ENCODE measurements at regions of chr11 and their contacts with region 1.

Region 1: GRCh38 chr11:18115360-18116127 is 9.7 kb upstream of the SAAL1 start:
- DNase-seq: peak; percentile 10 to 77 (median 66)
- ATAC-seq: peak; percentile 93
- H3K4me3 ChIP-seq: no peak overlapping the region
- H3K4me3 Mint-ChIP-seq: no peak overlapping the region
- H3K27ac ChIP-seq: no peak overlapping the region
- H3K27ac Mint-ChIP-seq: no peak overlapping the region
- H3K4me1 ChIP-seq: no peaks in the 10 kb centered on the region
- H3K4me1 Mint-ChIP-seq: peaks cover 3% of the 10 kb centered on the region
- H3K27me3 ChIP-seq: peaks cover 0 to 4% of the 10 kb centered on the region in 2 experiments
- H3K27me3 Mint-ChIP-seq: peaks cover 24% of the 10 kb centered on the region
- CTCF ChIP-seq: peak; percentile 73

Region 2: DNA sequence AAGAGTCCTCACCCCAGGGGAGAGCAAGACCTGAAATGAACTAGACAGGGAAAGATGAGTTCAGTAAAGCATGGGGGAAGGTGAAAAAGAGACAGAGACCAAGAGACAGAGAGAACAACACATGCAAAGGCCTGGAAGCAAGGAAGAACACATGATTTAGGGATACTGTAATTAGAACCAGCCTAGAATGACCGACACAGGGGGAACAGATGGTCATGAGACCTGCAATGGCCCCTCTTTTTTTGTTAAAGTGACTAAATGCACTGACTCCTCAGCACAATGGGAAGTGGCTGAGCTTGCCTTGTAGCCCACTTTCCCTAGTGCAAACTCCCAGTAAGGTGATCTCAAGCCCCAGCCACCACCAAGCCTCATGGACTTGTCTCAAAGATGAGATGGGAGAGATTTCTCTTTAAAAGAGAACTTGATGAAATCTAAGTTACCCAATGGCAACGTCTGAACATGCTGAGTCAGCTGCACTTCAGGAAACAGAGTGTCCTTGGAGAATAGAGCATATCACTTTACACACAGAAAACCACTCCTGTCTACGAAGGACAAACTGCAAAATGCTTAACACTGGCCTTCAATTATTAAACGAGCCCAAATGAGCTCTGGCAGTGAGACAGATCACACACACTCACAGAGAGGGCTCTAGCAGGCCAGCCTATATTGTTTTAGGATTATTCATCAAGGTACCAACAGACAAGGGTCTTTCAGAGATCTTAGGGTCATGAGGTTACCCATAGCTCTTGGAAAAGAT is 193.7 kb before region 1 on chr11:
- CTCF ChIA-PET with region 1: no interaction called
- POLR2A ChIA-PET with region 1: no interaction called
- intact Hi-C with region 1: no loop called
- DNase-seq: no peak
- ATAC-seq: no peak
- H3K4me3 ChIP-seq: no peak overlapping the region
- H3K4me3 Mint-ChIP-seq: no peak overlapping the region
- H3K27ac ChIP-seq: no peak overlapping the region
- H3K27ac Mint-ChIP-seq: no peak overlapping the region
- H3K4me1 ChIP-seq: no peaks in the 10 kb centered on the region
- H3K4me1 Mint-ChIP-seq: no peaks in the 10 kb centered on the region
- H3K27me3 ChIP-seq: no peaks in the 10 kb centered on the region
- H3K27me3 Mint-ChIP-seq: no peaks in the 10 kb centered on the region
- CTCF ChIP-seq: no peak

Region 3: GRCh38 chr11:17991783-17992433 is 123.6 kb before region 1 on chr11:
- CTCF ChIA-PET with region 1: interaction called, 16 read pairs
- POLR2A ChIA-PET with region 1: no interaction called
- intact Hi-C with region 1: no loop called
- DNase-seq: peak in 8 of 9 experiments; percentile 20 to 67 (median 44)
- ATAC-seq: peak; percentile 81
- H3K4me3 ChIP-seq: no peak overlapping the region
- H3K4me3 Mint-ChIP-seq: no peak overlapping the region
- H3K27ac ChIP-seq: no peak overlapping the region
- H3K27ac Mint-ChIP-seq: no peak overlapping the region
- H3K4me1 ChIP-seq: no peaks in the 10 kb centered on the region
- H3K4me1 Mint-ChIP-seq: no peaks in the 10 kb centered on the region
- H3K27me3 ChIP-seq: no peaks in the 10 kb centered on the region
- H3K27me3 Mint-ChIP-seq: no peaks in the 10 kb centered on the region
- CTCF ChIP-seq: peak; percentile 96

Region 4: GRCh38 chr11:18492888-18493287 is 377.3 kb after region 1 on chr11:
- CTCF ChIA-PET with region 1: no interaction called
- POLR2A ChIA-PET with region 1: no interaction called
- intact Hi-C with region 1: loop called in 1 of 2 experiments (anchors 10 kb)
- DNase-seq: no peak
- ATAC-seq: no peak
- H3K4me3 ChIP-seq: no peak overlapping the region
- H3K4me3 Mint-ChIP-seq: no peak overlapping the region
- H3K27ac ChIP-seq: no peak overlapping the region
- H3K27ac Mint-ChIP-seq: peak overlapping the region; percentile 32
- H3K4me1 ChIP-seq: no peaks in the 10 kb centered on the region
- H3K4me1 Mint-ChIP-seq: peaks cover 7% of the 10 kb centered on the region
- H3K27me3 ChIP-seq: no peaks in the 10 kb centered on the region
- H3K27me3 Mint-ChIP-seq: no peaks in the 10 kb centered on the region
- CTCF ChIP-seq: no peak

Region 5: DNA sequence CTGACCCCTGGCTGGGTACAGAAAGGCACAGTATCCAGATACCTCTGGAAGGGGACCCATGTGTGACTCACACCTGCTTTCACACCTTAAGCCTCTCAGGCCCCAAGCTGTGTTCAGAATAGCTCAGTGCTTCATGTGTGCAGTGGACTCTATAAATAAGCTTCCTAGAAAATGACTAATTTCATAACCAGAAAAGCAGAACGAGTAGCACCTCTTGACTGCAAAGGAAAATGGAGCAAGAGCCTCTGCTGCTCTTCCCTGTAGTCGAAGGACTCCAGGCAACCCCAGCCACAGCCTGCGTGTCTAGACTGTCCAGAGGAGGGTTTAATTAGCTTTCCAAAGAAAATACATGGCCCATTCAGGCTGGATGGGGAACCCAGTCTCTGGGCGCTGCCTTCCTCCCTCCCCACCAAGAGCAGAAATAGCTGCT is 652.9 kb after region 1 on chr11:
- CTCF ChIA-PET with region 1: interaction called, 52 read pairs
- POLR2A ChIA-PET with region 1: no interaction called
- intact Hi-C with region 1: loop called in 1 of 2 experiments (anchors 1 kb)
- DNase-seq: no peak
- ATAC-seq: no peak
- H3K4me3 ChIP-seq: no peak overlapping the region
- H3K4me3 Mint-ChIP-seq: no peak overlapping the region
- H3K27ac ChIP-seq: no peak overlapping the region
- H3K27ac Mint-ChIP-seq: no peak overlapping the region
- H3K4me1 ChIP-seq: no peaks in the 10 kb centered on the region
- H3K4me1 Mint-ChIP-seq: peaks cover 4% of the 10 kb centered on the region
- H3K27me3 ChIP-seq: no peaks in the 10 kb centered on the region
- H3K27me3 Mint-ChIP-seq: peaks cover 20% of the 10 kb centered on the region
- CTCF ChIP-seq: no peak

Region 6: DNA sequence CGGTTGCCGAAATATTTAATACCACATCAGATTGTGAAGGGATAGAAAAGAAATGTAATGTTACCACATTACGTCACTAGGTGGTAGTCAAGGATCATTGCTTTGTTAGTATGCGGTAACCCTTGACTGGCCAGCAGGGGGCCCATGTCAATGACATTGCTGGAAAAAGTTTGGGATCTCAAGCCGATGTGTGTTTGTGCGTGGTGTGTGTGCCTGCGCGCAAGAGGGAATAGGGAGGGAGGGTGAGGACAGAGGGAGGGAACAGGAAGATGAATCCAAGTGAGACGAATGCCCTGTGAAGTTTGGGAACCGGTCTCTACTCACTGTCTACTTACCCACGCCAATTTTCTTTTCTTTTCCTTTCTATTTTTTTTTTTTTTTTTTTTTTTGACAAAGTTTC is 955.7 kb after region 1 on chr11:
- CTCF ChIA-PET with region 1: no interaction called
- POLR2A ChIA-PET with region 1: no interaction called
- intact Hi-C with region 1: loop called in 1 of 2 experiments (anchors 5 kb)
- DNase-seq: peak in 8 of 9 experiments; percentile 15 to 81 (median 46)
- ATAC-seq: peak; percentile 90
- H3K4me3 ChIP-seq: no peak overlapping the region
- H3K4me3 Mint-ChIP-seq: peak overlapping the region; percentile 38
- H3K27ac ChIP-seq: no peak overlapping the region
- H3K27ac Mint-ChIP-seq: no peak overlapping the region
- H3K4me1 ChIP-seq: peaks cover 4% of the 10 kb centered on the region
- H3K4me1 Mint-ChIP-seq: peaks cover 5% of the 10 kb centered on the region
- H3K27me3 ChIP-seq: no peaks in the 10 kb centered on the region
- H3K27me3 Mint-ChIP-seq: peaks cover 18% of the 10 kb centered on the region
- CTCF ChIP-seq: peak; percentile 90